AG04450 (cell line): ENCODE measurements at regions of chr1 and their contacts with region 1.

Region 1: GRCh38 chr1:119647734-119648619 is at the start of gene ZNF697:
- DNase-seq: peak; percentile 95
- H3K4me3 ChIP-seq: peak within 1 kb of the TSS; percentile 98
- H3K27ac ChIP-seq: peak within 1 kb of the TSS; percentile 91
- H3K27me3 ChIP-seq: peaks cover 4% of the 10 kb centered on the region
- CTCF ChIP-seq: peak; percentile 59
- polyA plus RNA-seq, gene ZNF697: 11.6 and 12.9 TPM in 2 replicates

Region 2: DNA sequence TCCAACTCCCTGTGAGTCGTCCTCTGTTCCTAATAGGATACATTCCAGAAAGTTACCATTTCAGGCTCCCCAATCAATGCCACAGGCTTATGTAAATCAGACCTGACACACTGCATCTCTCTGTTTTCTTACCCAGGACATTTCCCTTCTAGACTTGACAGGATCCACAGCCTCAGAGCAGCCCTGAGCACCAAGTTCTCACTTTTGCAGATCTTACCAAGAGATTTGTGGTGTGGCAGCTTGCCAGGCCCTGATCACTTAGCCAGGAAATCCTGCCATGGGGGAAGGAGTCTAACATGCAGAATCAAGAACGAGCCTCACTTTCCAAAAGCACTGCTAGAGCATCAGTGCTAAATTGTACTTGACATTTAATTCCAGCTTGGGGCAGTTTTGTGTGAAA is 862.7 kb before region 1 on chr1:
- CTCF ChIA-PET with region 1: no interaction called
- POLR2A ChIA-PET with region 1: no interaction called
- DNase-seq: no peak
- H3K4me3 ChIP-seq: no peak overlapping the region
- H3K27ac ChIP-seq: no peak overlapping the region
- H3K27me3 ChIP-seq: no peaks in the 10 kb centered on the region
- CTCF ChIP-seq: no peak

Region 3: GRCh38 chr1:119613769-119614720 is 33.9 kb before region 1 on chr1:
- CTCF ChIA-PET with region 1: interaction called, 23 read pairs
- POLR2A ChIA-PET with region 1: interaction called, 16 read pairs
- DNase-seq: peak; percentile 75
- H3K4me3 ChIP-seq: no peak overlapping the region
- H3K27ac ChIP-seq: no peak overlapping the region
- H3K27me3 ChIP-seq: peaks cover 3% of the 10 kb centered on the region
- CTCF ChIP-seq: peak; percentile 84

Region 4: GRCh38 chr1:119631433-119632102 is 16.4 kb before region 1 on chr1:
- CTCF ChIA-PET with region 1: interaction called, 21 read pairs
- POLR2A ChIA-PET with region 1: interaction called, 12 read pairs
- DNase-seq: peak; percentile 34
- H3K4me3 ChIP-seq: peak overlapping the region; percentile 11; the same call in 1 of the 2 replicates
- H3K27ac ChIP-seq: peak overlapping the region; percentile 55
- H3K27me3 ChIP-seq: no peaks in the 10 kb centered on the region
- CTCF ChIP-seq: no peak

Region 5: DNA sequence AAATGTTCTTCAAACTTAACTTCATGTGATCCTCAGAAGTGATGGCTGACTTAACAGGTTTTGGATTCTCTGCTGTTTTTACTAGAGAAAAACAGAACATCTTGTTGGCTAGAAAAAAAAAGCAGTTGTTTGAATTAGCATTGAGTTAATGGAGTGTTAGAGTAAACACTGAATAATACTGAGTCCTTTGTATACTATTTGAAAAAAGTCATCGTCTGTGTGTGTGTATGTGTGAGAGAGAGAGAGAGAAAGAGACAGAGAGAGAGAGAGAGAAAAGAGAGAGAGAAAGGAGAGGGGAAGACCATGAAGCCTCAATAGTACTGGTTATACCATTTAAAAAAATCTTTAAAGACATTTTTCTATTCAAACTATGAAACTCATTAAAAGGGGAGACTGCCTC is 10.3 kb before region 1 on chr1:
- CTCF ChIA-PET with region 1: interaction called, 20 read pairs
- POLR2A ChIA-PET with region 1: interaction called, 12 read pairs
- DNase-seq: no peak
- H3K4me3 ChIP-seq: no peak overlapping the region
- H3K27ac ChIP-seq: no peak overlapping the region
- H3K27me3 ChIP-seq: no peaks in the 10 kb centered on the region
- CTCF ChIP-seq: no peak

Region 6: GRCh38 chr1:119662034-119662437 is 14.1 kb after region 1 on chr1:
- CTCF ChIA-PET with region 1: interaction called, 41 read pairs
- POLR2A ChIA-PET with region 1: interaction called, 17 read pairs
- DNase-seq: no peak
- H3K4me3 ChIP-seq: no peak overlapping the region
- H3K27ac ChIP-seq: no peak overlapping the region
- H3K27me3 ChIP-seq: peaks cover 3% of the 10 kb centered on the region
- CTCF ChIP-seq: no peak

Region 7: GRCh38 chr1:119711804-119712341 is 63.9 kb after region 1 on chr1 and contains the start of gene PHGDH:
- CTCF ChIA-PET with region 1: no interaction called
- POLR2A ChIA-PET with region 1: interaction called, 11 read pairs
- DNase-seq: peak; percentile 74
- H3K4me3 ChIP-seq: peak within 1 kb of the TSS; percentile 99
- H3K27ac ChIP-seq: peak within 1 kb of the TSS; percentile 88
- H3K27me3 ChIP-seq: peaks cover 14% of the 10 kb centered on the region
- CTCF ChIP-seq: no peak
- polyA plus RNA-seq, gene PHGDH: 108 and 174 TPM in 2 replicates